Activated CD8-positive, alpha-beta memory T cell treated with anti-CD3 and anti-CD28 coated beads, Interleukin-2, amount 10 ng/mL, durations not matched to agents 7 days and 5 days (primary cell): ENCODE measurements at regions of chr3 and their contacts with region 1.

Region 1: DNA sequence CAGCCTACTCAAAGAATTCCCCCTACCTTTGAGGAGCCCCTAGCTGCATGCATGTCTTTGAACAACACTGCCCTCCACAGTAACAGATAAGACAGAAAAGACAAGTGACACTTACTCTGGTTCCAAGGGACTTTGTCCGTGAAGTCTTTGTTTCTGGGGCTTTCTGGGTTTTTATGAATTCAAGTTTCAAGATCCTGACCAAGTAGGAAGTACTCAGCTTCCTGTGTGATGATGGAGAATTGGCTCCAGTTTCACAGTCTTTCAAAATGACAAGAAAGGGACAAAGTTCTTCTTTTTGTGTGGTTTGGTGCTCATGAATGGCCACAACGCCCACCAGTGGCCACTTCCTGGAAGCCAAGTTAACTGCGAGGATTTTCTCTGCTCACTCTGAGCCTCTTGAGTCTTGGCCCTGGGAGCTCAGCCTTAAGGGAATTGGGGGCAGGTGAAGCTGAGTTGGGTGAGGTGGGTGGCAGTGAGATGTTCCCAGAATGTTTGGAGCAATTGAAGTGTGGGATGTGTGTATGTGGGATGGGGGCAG is at the start of gene CCR1:
- DNase-seq: peak; percentile 89
- ATAC-seq: peak; percentile 67
- H3K4me3 Mint-ChIP-seq: peak within 1 kb of the TSS; percentile 79
- H3K27ac Mint-ChIP-seq: peak within 1 kb of the TSS; percentile 90
- H3K4me1 Mint-ChIP-seq: peaks cover 68% of the 10 kb centered on the region
- H3K27me3 Mint-ChIP-seq: no peaks in the 10 kb centered on the region
- total RNA-seq, gene CCR1: 35.3 to 55.6 TPM

Region 2: DNA sequence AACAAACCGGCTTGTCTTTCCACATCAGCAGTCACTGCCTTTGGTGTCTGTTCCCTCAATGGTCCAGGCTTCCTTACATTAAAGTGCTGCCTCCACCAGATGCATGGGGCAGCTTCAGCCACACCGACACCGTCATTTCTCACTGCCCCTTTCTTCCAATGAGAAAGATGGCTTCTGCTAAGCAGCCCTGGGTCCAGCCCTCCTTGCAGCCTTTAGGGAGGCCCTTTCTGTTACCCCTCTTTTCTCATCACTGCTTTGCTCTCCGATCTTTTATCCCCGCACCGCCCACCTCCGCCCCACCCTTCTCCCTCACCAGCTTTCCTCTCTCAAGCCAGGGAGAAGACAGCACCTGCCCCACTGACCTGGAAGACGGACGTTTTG is 293.2 kb before region 1 on chr3:
- CTCF ChIA-PET with region 1: no interaction called
- DNase-seq: no peak
- ATAC-seq: no peak
- H3K4me3 Mint-ChIP-seq: peak overlapping the region; percentile 52
- H3K27ac Mint-ChIP-seq: peak overlapping the region; percentile 81
- H3K4me1 Mint-ChIP-seq: peaks cover 71% of the 10 kb centered on the region
- H3K27me3 Mint-ChIP-seq: peaks cover 25% of the 10 kb centered on the region

Region 3: DNA sequence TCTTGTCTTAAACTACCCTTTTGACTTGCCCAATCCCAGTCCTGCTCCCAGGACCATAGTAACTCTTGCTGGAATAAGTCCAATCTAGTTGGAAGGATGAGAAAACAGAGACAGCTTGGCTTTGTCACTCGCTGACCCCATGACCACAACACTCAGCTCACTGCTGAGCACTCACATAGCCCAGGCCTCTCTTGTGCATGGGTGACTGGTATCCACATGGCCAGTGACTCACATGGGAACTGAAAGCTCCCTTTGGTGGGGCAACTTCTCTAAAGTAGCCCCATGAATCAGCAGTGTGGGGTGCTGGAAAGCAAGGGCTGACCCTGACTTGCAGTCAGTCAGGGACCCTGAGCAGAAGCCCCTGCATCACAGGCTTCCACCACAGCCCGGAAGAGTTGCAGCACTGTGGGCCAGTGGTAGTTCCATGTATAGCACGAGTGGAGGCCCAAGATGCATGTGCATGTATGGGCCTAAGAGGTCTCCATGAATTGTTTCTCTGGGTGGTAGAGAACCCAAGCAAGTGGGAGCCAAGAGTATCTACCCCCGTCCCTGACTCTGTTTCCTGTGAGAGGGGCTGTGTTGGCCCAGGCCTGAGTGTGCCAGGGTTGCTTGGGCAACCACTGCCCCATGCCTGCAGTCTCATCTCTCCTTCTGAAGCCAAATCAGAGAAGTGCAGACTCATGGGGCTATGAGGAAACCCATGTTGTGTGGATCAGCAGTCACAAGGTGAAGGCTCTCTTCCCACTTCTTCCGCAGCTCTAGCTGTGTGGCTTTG is 118.8 kb before region 1 on chr3:
- CTCF ChIA-PET with region 1: interaction called, 98 read pairs
- DNase-seq: peak; percentile 76
- ATAC-seq: peak; percentile 71
- H3K4me3 Mint-ChIP-seq: no peak overlapping the region
- H3K27ac Mint-ChIP-seq: peak overlapping the region; percentile 66
- H3K4me1 Mint-ChIP-seq: peaks cover 65% of the 10 kb centered on the region
- H3K27me3 Mint-ChIP-seq: peaks cover 3% of the 10 kb centered on the region

Region 4: DNA sequence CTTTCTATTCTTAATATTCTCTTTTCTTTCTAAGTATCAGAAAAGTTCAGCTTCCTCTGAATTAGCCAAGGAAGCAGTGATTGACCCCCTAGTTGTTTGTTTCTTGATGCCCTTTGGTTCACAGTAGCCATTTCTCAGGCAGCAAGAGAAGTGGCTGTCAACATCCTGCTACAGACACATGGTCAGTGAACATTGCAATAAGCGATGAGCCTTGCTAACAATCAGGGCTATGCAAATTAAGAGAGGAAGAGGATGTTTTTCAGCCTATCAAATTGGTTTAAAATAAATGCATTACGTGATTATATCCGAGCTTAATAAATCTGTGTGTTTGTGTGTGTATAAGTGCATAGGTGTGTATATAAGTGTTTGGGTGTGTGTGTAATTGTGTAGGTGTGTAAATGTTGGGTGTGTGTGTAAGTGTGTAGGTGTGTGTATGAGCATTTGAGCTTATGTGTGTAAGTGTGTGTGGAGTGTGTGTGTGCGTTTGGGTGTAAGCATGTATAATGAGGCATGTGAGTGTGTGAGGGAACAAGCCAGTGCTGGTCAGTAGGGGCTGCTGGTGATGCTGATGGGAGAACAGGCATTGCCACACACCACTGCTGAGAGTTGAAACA is 102.8 kb before region 1 on chr3:
- CTCF ChIA-PET with region 1: interaction called, 94 read pairs
- DNase-seq: no peak
- ATAC-seq: no peak
- H3K4me3 Mint-ChIP-seq: no peak overlapping the region
- H3K27ac Mint-ChIP-seq: peak overlapping the region; percentile 55
- H3K4me1 Mint-ChIP-seq: peaks cover 88% of the 10 kb centered on the region
- H3K27me3 Mint-ChIP-seq: no peaks in the 10 kb centered on the region

Region 5: GRCh38 chr3:46276502-46277099 is 68.4 kb after region 1 on chr3:
- CTCF ChIA-PET with region 1: interaction called, 23 read pairs
- DNase-seq: peak; percentile 92
- ATAC-seq: peak; percentile 82
- H3K4me3 Mint-ChIP-seq: no peak overlapping the region
- H3K27ac Mint-ChIP-seq: peak overlapping the region; percentile 87
- H3K4me1 Mint-ChIP-seq: peaks cover 61% of the 10 kb centered on the region
- H3K27me3 Mint-ChIP-seq: peaks cover 11% of the 10 kb centered on the region